ENCODE measurements at regions of chr1 and their contacts with region 1.

Region 1: GRCh38 chr1:17922833-17923232 is 167.7 kb downstream of the ACTL8 start:
- DNase-seq: peak; percentile 12
- ATAC-seq: no peak
- H3K4me3 ChIP-seq: no peak overlapping the region
- H3K27ac ChIP-seq: no peak overlapping the region
- H3K4me1 ChIP-seq: no peaks in the 10 kb centered on the region
- H3K27me3 ChIP-seq: peaks cover 6% of the 10 kb centered on the region
- CTCF ChIP-seq: peak; percentile 44
- POLR2A ChIP-seq: no peak
- RAD21 ChIP-seq: peak; percentile 58

Region 2: DNA sequence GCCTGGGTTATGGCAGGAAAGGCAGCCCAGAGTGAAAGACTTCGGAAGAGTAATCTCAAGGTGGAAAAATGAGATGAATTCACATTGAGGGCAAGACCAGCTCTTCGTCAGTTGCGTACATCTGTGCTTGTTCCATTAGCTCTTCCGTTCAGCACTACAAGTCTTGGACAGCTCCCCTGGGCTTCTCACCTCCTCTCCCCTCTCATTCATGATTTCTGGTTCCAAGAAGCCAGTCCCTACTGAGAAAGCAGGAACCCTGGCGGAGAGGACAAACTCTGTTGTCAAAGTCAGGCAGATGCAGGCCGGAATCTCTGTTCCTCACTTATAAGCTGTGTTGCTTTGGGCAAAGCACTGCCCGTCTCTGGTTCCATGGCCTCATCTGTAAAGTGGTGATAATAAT is 91.2 kb before region 1 on chr1:
- CTCF ChIA-PET with region 1: no interaction called
- POLR2A ChIA-PET with region 1: no interaction called
- dilution Hi-C with region 1: no loop called
- in situ Hi-C with region 1: no loop called
- intact Hi-C with region 1: loop called (anchors 1 kb)
- DNase-seq: peak; percentile 59
- ATAC-seq: peak; percentile 72
- H3K4me3 ChIP-seq: no peak overlapping the region
- H3K27ac ChIP-seq: no peak overlapping the region
- H3K4me1 ChIP-seq: no peaks in the 10 kb centered on the region
- H3K27me3 ChIP-seq: peaks cover 18% of the 10 kb centered on the region
- CTCF ChIP-seq: no peak
- POLR2A ChIP-seq: no peak
- RAD21 ChIP-seq: no peak

Region 3: DNA sequence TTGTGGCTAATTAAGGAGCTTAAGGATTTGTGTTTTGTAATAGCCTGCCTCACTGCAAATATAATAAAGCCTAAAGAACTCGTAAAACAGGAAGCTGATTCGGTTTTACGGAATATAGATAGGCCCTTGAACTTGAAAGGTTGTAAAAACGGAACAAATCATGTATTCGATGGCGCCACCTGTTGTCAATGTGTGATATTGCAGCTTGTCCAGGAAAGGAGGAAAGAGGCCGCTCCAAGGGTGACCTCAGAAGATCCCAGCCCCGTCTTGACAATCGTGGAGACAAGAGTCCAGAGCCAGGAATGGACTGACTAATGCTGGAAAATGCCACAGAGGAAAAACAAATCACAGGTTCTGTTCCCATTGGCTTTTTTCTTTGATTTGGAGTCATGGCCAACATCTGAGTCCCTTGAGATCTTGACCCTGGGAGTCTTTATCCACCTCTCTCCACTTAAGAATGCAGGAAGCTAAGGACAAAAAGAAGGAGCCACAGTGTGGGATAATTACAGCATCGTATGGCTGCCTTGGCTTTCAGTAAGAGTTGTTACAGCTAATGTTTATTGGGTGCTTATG is 177.7 kb after region 1 on chr1:
- CTCF ChIA-PET with region 1: no interaction called
- POLR2A ChIA-PET with region 1: no interaction called
- dilution Hi-C with region 1: no loop called
- in situ Hi-C with region 1: no loop called
- intact Hi-C with region 1: loop called (anchors 5 kb)
- DNase-seq: peak; percentile 49
- ATAC-seq: peak; percentile 82
- H3K4me3 ChIP-seq: no peak overlapping the region
- H3K27ac ChIP-seq: no peak overlapping the region
- H3K4me1 ChIP-seq: no peaks in the 10 kb centered on the region
- H3K27me3 ChIP-seq: peaks cover 3% of the 10 kb centered on the region; the same call in 1 of the 2 replicates
- CTCF ChIP-seq: peak; percentile 73
- POLR2A ChIP-seq: no peak
- RAD21 ChIP-seq: peak; percentile 63

Region 4: GRCh38 chr1:18396247-18396980 is 473.6 kb after region 1 on chr1:
- CTCF ChIA-PET with region 1: no interaction called
- POLR2A ChIA-PET with region 1: no interaction called
- dilution Hi-C with region 1: no loop called
- in situ Hi-C with region 1: no loop called
- intact Hi-C with region 1: no loop called
- DNase-seq: peak; percentile 0
- ATAC-seq: no peak
- H3K4me3 ChIP-seq: no peak overlapping the region
- H3K27ac ChIP-seq: no peak overlapping the region
- H3K4me1 ChIP-seq: no peaks in the 10 kb centered on the region
- H3K27me3 ChIP-seq: no peaks in the 10 kb centered on the region
- CTCF ChIP-seq: no peak
- POLR2A ChIP-seq: no peak
- RAD21 ChIP-seq: no peak

Region 5: DNA sequence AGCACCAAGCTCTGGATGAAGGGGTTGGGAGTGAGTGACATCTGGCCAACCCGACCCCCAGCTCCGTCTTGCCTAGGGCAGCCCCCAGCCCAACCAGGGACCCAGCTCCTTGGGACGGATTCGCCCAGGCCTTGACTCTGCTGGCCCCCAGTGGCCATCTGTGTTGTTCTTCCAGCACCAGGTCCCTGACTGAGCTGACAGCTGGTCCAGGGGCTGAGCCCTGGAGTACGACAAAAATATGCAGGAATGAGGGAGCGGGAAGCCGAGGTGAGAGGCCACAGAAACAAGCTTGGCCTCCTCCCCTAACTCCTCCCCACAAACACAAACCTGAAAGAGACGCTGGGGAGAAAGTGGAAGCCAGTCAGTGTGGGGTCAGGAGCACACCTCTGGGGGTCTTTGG is 652.8 kb after region 1 on chr1:
- CTCF ChIA-PET with region 1: no interaction called
- POLR2A ChIA-PET with region 1: no interaction called
- dilution Hi-C with region 1: no loop called
- in situ Hi-C with region 1: no loop called
- intact Hi-C with region 1: loop called (anchors 5 kb)
- DNase-seq: peak; percentile 8
- ATAC-seq: peak; percentile 81
- H3K4me3 ChIP-seq: no peak overlapping the region
- H3K27ac ChIP-seq: no peak overlapping the region
- H3K4me1 ChIP-seq: no peaks in the 10 kb centered on the region
- H3K27me3 ChIP-seq: no peaks in the 10 kb centered on the region; the same call in 1 of the 2 replicates
- CTCF ChIP-seq: peak; percentile 50
- POLR2A ChIP-seq: no peak
- RAD21 ChIP-seq: peak; percentile 53

Region 6: GRCh38 chr1:18597160-18598042 is 674.6 kb after region 1 on chr1:
- CTCF ChIA-PET with region 1: no interaction called
- POLR2A ChIA-PET with region 1: no interaction called
- dilution Hi-C with region 1: no loop called
- in situ Hi-C with region 1: no loop called
- intact Hi-C with region 1: no loop called
- DNase-seq: peak; percentile 25
- ATAC-seq: peak; percentile 85
- H3K4me3 ChIP-seq: no peak overlapping the region
- H3K27ac ChIP-seq: no peak overlapping the region
- H3K4me1 ChIP-seq: no peaks in the 10 kb centered on the region
- H3K27me3 ChIP-seq: peaks cover 2% of the 10 kb centered on the region; the same call in 1 of the 2 replicates
- CTCF ChIP-seq: peak; percentile 88
- POLR2A ChIP-seq: no peak
- RAD21 ChIP-seq: peak; percentile 93

Region 7: GRCh38 chr1:18681423-18681835 is 758.6 kb after region 1 on chr1:
- CTCF ChIA-PET with region 1: no interaction called
- POLR2A ChIA-PET with region 1: no interaction called
- dilution Hi-C with region 1: no loop called
- in situ Hi-C with region 1: no loop called
- intact Hi-C with region 1: no loop called
- DNase-seq: peak; percentile 16
- ATAC-seq: 0 out of 2 replicates have a peak, but pooled peaks have one; percentile 44
- H3K4me3 ChIP-seq: no peak overlapping the region
- H3K27ac ChIP-seq: no peak overlapping the region
- H3K4me1 ChIP-seq: no peaks in the 10 kb centered on the region
- H3K27me3 ChIP-seq: peaks cover 4% of the 10 kb centered on the region
- CTCF ChIP-seq: peak; percentile 43
- POLR2A ChIP-seq: no peak
- RAD21 ChIP-seq: peak; percentile 27; the same call in 1 of the 2 replicates